PC-9 (cell line): ENCODE measurements at regions of chr7 and their contacts with region 1.

Region 1: GRCh38 chr7:26122745-26123144 is 29.3 kb upstream of the NFE2L3 start:
- DNase-seq: no peak
- H3K4me3 ChIP-seq: no peak overlapping the region
- H3K27ac ChIP-seq: no peak overlapping the region
- H3K4me1 ChIP-seq: 0 out of 2 replicates have a peak, but pooled peaks cover 6% of the 10 kb centered on the region
- H3K27me3 ChIP-seq: no peaks in the 10 kb centered on the region
- CTCF ChIP-seq: no peak

Region 2: DNA sequence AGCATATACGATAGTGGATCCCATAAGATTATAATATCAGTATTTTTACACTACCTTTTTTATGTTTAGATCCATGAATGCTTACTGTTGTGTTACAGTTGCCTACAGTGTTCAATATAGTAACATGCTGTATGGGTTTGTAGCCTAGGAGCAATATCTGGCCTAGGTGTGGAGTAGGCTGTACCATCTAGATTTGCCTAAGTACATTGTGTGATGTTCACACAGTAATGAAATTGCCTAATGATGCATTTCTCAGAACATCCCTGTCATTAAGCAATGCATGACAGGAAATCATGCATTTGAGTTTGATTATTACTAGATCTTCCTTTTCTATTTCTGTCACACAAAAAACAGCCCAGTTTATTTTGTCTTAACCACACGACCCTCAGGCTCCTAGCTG is 93.3 kb after region 1 on chr7:
- CTCF ChIA-PET with region 1: interaction called, 10 read pairs
- POLR2A ChIA-PET with region 1: no interaction called
- intact Hi-C with region 1: no loop called
- DNase-seq: no peak
- H3K4me3 ChIP-seq: no peak overlapping the region
- H3K27ac ChIP-seq: no peak overlapping the region
- H3K4me1 ChIP-seq: no peaks in the 10 kb centered on the region
- H3K27me3 ChIP-seq: no peaks in the 10 kb centered on the region
- CTCF ChIP-seq: no peak